ENCODE measurements at regions of chr16 and their contacts with region 1.

Region 1: DNA sequence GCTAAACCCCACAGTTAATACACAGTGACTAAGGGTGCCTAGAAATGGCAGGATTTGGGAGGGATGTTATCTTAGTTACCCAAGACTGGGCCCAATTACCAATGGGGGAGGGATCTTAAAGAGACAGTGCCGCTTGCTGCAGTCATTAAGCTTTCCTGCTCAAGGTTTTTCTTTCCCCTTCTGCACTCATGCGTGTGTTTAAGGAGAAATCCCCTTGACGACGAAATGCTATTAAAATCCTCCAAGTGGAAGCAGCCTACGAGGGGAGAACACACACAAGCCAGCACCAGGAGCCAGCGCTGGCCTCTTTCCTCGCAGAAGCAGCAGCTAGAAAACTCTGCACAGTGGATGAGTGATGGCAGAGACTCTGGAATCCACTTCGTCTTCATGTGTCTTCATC is 22.0 kb downstream of the SALL1 start:
- DNase-seq: no peak
- H3K4me3 ChIP-seq: no peak overlapping the region
- H3K27ac ChIP-seq: no peak overlapping the region
- H3K4me1 ChIP-seq: no peaks in the 10 kb centered on the region
- H3K27me3 ChIP-seq: peaks cover 13% of the 10 kb centered on the region
- CTCF ChIP-seq: no peak
- EP300 ChIP-seq: no peak
- POLR2A ChIP-seq: no peak

Region 2: GRCh38 chr16:50996830-50997186 is 132.3 kb before region 1 on chr16:
- in situ Hi-C with region 1: no loop called
- intact Hi-C with region 1: no loop called
- DNase-seq: no peak
- H3K4me3 ChIP-seq: no peak overlapping the region
- H3K27ac ChIP-seq: no peak overlapping the region
- H3K4me1 ChIP-seq: no peaks in the 10 kb centered on the region
- H3K27me3 ChIP-seq: no peaks in the 10 kb centered on the region
- CTCF ChIP-seq: no peak
- EP300 ChIP-seq: no peak
- POLR2A ChIP-seq: no peak

Region 3: DNA sequence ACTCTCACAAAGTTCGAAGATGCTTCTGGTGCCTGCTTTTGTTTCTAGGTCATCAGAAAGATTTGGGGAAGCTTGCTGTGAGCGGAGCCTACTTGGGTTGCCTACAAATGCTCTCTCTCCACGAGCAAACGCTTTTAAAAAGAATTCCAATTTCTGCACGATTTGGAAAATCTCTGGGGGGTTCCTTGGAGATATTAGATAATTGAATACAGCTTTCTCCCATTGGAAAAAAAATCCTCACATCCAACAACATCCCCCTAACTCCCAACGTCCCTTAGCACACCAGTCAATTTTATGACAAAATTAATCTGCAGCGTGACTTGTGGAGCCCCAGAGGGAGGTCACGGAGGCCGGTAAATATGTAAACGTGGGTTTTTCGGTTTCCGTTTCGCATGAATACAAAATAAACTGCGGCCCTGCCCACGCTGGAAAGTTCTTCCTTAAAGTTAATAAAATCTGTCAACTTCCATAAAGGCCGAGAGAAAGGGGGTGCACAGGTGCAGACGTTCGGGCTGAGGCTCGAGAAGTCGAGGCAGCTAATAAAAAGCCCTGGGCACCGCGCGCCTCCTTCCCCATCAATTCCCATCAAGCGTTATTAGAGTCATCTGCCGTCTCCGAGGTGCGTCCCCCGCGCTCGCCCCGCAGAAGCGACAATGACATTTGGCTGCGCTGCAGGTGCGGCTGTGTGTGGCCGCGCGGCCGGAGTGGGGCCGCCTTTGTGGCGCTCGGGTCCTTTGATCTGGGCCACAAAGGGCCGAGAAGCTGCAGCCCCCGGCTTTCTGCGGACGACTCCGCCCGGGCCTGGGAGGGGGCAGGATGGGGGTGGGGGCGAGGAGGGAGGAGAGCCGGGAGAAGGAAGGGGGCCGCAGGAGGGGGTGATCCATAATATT is 15.6 kb before region 1 on chr16:
- in situ Hi-C with region 1: no loop called
- intact Hi-C with region 1: loop called (anchors 1 kb)
- DNase-seq: no peak
- H3K4me3 ChIP-seq: no peak overlapping the region
- H3K27ac ChIP-seq: no peak overlapping the region
- H3K4me1 ChIP-seq: peaks cover 0 to 2% (median 0%) of the 10 kb centered on the region in 4 donors
- H3K27me3 ChIP-seq: peaks cover 35% of the 10 kb centered on the region
- CTCF ChIP-seq: no peak
- EP300 ChIP-seq: no peak
- POLR2A ChIP-seq: no peak

Measured in transverse colon (tissue), 4 donors.